A549 (cell line): ENCODE measurements at regions of chr7 and their contacts with region 1.

Region 1: GRCh38 chr7:112449902-112450806 is at the start of gene IFRD1:
- DNase-seq: peak; percentile 94 to 99
- ATAC-seq: peak; percentile 89 to 95
- H3K4me3 ChIP-seq: peak within 1 kb of the TSS; percentile 83
- H3K27ac ChIP-seq: peak within 1 kb of the TSS; percentile 91 to 93
- H3K4me1 ChIP-seq: peaks cover 29% of the 10 kb centered on the region
- CTCF ChIP-seq: no peak
- EP300 ChIP-seq: no peak
- POLR2A ChIP-seq: peak; percentile 98
- RAD21 ChIP-seq: no peak; a peak in 2 of 5 replicates
- polyA plus RNA-seq, gene IFRD1: 95.1 and 129 TPM in 2 replicates

Region 2: DNA sequence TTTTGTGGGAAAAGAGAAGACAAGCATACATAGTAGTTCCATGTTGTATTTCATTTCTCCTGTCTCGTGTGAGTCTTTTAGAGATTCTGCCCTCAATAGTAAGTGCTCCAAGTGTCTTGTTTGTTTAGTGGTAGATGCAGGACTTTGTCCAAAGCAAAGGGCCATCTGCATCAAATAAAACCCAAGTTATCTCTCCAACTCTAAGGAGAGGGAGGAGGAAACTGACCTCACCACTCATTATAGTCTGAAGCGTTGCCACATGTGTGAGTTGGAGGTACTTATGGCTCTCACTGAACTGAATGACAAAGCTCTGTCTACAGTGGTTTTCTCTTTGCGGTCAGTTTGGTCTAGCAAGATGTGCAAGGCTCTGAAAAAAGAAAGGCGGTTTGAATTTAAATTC is 516.5 kb before region 1 on chr7:
- CTCF ChIA-PET with region 1: no interaction called
- POLR2A ChIA-PET with region 1: interaction called, 10 read pairs
- DNase-seq: no peak
- ATAC-seq: no peak
- H3K4me3 ChIP-seq: no peak overlapping the region
- H3K27ac ChIP-seq: no peak overlapping the region
- H3K4me1 ChIP-seq: 0 out of 3 replicates have a peak, but pooled peaks cover 3% of the 10 kb centered on the region
- CTCF ChIP-seq: no peak
- EP300 ChIP-seq: no peak
- POLR2A ChIP-seq: no peak
- RAD21 ChIP-seq: no peak

Region 3: DNA sequence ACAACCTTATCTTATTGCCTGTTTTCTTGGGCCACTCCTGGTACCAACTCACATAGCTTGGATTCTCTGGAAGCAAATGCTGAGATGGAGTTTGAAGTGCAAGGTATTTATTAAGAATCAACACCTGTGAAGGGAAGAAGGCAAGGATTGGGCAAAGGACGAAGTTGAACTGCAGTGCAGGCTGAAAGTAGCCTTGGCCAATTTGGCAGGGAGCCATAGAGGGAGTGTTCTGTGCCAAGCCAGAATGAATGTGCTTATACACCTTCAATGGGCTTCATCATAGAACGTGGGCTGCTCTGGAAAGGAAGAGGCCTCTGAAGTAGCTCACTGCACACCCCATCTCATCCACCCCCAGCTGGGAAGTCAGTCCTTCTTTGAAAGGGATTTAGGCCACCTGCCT is 79.7 kb before region 1 on chr7:
- CTCF ChIA-PET with region 1: no interaction called
- POLR2A ChIA-PET with region 1: no interaction called
- DNase-seq: no peak
- ATAC-seq: no peak
- H3K4me3 ChIP-seq: no peak overlapping the region
- H3K27ac ChIP-seq: no peak overlapping the region
- H3K4me1 ChIP-seq: no peaks in the 10 kb centered on the region
- CTCF ChIP-seq: no peak
- EP300 ChIP-seq: no peak
- POLR2A ChIP-seq: no peak
- RAD21 ChIP-seq: no peak

Region 4: DNA sequence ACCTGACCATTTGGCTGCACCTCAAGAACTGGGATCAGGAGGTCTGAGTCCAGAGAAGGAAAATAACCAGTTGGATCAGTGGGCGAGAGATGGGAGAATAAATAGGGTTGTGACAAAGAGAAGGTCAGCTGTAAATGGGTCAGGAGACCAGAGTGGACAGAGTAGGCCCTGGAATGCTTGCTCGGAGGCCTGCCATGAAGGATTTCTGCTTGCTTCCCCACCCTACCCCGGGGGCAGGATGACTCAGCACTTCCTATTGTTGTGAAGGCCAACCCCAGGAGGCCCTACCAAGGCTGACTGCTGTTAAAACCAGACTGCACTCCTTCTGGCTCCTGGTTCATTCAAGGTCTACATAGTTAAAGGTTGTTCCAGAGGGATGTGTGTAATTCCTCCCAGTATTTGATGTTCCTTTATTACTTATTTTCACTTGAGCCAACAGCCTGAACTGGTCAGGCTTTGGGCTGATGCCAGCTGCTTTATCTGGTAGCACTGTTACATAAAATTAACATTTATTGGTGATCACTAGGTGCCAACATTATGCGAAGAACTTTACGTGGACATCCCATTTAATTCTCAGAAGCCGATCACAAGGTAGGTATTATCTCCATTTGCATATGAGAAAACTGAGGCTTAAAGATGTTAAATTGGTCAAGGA is 27.2 kb before region 1 on chr7:
- CTCF ChIA-PET with region 1: interaction called, 3 read pairs
- POLR2A ChIA-PET with region 1: interaction called, 13 read pairs
- DNase-seq: peak; percentile 59 to 90
- ATAC-seq: peak; percentile 82 to 90
- H3K4me3 ChIP-seq: no peak overlapping the region
- H3K27ac ChIP-seq: peak overlapping the region; percentile 65 to 77
- H3K4me1 ChIP-seq: peaks cover 36% of the 10 kb centered on the region
- CTCF ChIP-seq: no peak
- EP300 ChIP-seq: no peak
- POLR2A ChIP-seq: no peak
- RAD21 ChIP-seq: no peak

Region 5: GRCh38 chr7:112437043-112437442 is 13.1 kb before region 1 on chr7:
- CTCF ChIA-PET with region 1: interaction called, 3 read pairs
- POLR2A ChIA-PET with region 1: interaction called, 42 read pairs
- DNase-seq: peak in 1 of 2 experiments; percentile 21
- ATAC-seq: peak; percentile 52 to 78; a peak in 4 of 6 replicates
- H3K4me3 ChIP-seq: no peak overlapping the region
- H3K27ac ChIP-seq: peak overlapping the region; percentile 41 to 52; a peak in 5 of 6 replicates
- H3K4me1 ChIP-seq: peaks cover 36% of the 10 kb centered on the region
- CTCF ChIP-seq: no peak
- EP300 ChIP-seq: no peak
- POLR2A ChIP-seq: no peak
- RAD21 ChIP-seq: no peak

Region 6: DNA sequence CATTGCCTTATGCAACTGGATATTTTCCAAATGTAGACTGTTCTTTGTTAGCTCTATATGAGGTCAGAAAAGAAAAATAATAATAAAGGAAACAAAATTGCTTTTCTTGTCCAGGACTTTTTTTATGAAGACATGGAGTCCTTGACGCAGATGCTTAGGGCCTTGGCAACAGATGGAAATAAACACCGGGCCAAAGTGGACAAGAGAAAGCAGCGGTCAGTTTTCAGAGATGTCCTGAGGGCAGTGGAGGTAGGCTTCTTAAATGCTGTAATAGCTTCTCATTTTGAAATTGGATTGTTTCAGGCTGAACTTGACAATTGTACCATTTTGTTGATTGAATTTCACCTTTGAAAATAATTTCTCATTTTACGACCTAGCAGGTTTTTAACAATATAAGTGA is 17.7 kb after region 1 on chr7:
- CTCF ChIA-PET with region 1: interaction called, 5 read pairs
- POLR2A ChIA-PET with region 1: interaction called, 89 read pairs
- DNase-seq: no peak
- ATAC-seq: no peak
- H3K4me3 ChIP-seq: no peak overlapping the region
- H3K27ac ChIP-seq: no peak overlapping the region
- H3K4me1 ChIP-seq: peaks cover 1% of the 10 kb centered on the region; the same call in 1 of the 3 replicates
- CTCF ChIP-seq: no peak
- EP300 ChIP-seq: no peak
- POLR2A ChIP-seq: no peak
- RAD21 ChIP-seq: no peak